GM10248 (cell line): ENCODE measurements at regions of chr11 and their contacts with region 1.

Region 1: DNA sequence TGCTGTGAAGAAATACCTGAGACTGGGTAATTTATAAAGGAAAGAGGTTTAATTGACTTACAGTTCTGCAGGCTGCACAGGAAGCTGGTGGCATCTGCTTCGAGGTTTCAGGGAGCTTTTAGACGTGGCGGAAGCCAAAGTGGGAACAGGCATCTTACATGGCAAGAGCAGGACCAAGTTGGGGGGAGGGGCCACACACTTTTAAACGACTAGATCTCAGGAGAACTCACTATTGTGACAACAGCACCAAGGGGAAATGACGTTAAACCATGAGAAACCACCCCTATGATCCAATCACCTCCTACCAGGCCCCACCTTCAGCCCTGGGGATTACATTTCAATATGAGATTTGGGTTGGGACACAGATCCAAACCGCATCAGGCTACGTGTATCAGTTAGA is 11.1 kb upstream of the SCGB1D4 start:
- DNase-seq: no peak
- CTCF ChIP-seq: no peak

Region 2: DNA sequence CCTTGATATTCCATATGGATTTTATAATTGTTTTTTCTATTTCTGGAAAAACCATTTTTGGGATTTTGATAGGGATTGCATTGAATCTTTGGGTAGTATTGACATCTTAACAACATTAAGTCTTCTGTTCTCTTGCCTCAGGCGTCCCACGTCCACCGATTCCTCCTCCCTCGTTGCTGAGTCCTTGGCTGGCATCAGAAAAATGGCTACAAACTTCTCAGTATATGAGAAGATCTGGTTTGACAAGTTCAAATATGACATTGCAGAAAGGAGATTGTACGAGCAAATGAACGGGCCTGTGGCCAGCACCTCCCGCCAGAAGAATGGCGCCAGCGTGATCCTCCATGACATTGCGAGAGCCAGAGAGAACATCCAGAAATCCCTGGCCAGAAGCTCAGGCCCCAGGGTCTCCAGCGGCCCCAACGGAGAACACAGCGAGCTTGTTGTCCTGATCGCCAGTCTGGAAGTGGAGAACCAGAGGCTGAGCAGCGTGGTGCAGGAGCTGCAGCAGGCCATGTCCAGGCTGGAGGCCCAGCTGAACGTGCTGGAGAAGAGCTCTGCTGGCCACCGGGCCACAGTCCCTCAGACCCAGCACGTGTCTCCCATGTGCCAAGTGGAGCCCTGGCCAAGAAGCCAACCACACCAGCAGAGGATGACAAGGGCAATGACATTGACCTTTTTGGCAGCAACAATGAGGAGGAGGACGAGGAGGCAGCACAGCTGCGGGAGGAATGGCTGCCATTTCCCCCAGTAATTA is 140.7 kb before region 1 on chr11:
- CTCF ChIA-PET with region 1: interaction called, 25 read pairs
- POLR2A ChIA-PET with region 1: no interaction called
- DNase-seq: no peak
- CTCF ChIP-seq: no peak